GM13977 (cell line): ENCODE measurements at regions of chr4 and their contacts with region 1.

Region 1: GRCh38 chr4:149897783-149898182 is 82.1 kb upstream of the IQCM start:
- DNase-seq: no peak
- CTCF ChIP-seq: peak; percentile 42

Region 2: DNA sequence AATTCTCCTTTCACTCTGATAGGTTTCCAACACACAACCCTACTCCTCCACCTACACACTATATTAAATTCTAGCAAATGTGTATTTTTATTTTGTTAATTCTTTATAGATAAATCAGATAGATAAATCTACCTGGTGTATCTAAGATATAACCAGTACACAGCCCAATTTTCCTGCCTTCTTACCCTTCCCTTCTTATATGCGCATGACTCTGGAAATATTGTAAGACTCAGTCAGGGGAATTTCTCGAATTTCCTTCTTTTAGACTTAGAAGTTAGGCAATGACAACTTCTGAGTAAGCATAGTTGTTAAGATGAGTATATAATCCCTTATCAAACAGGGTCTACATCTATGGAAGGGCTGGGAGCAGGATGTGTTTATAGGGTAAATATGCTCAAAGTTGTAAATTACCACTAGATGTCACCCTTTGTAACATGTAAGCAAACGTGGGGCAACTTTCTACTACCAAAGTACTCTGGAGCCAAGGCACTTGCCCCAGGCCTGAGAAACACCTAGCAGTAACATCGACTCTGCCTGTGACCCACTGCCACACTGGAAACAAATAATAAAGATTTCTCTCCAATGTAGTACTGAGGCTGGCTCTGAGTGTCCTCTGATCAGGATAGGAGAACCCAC is 526.9 kb before region 1 on chr4:
- in situ Hi-C with region 1: loop called (anchors 25 kb)
- DNase-seq: peak; percentile 25
- CTCF ChIP-seq: peak; percentile 45

Region 3: DNA sequence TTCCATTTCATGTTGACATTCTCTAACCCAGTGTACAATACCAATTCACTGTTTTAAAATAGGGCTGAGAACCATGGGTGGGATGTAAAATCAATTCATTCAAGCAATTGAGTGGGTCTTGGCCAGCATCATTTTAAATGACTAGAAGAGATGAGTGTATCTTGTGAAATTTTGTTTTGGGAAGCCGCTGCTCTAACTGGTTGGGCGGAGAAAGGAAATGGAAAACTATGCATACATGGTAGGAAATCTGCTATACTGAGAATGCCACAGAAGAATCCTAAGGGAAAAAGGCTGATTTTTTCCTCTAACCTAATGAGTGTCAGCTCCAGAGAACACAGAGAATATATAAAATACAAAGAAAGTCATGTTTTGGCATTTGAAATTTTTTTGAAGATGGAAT is 125.7 kb after region 1 on chr4:
- in situ Hi-C with region 1: no loop called
- DNase-seq: no peak
- CTCF ChIP-seq: no peak